ENCODE measurements at regions of chr19 and their contacts with region 1.

Region 1: GRCh38 chr19:46265217-46265828 is 31.5 kb upstream of the HIF3A start:
- DNase-seq: peak; percentile 76
- H3K4me3 ChIP-seq: no peak overlapping the region
- H3K27ac ChIP-seq: no peak overlapping the region
- H3K4me1 ChIP-seq: no peaks in the 10 kb centered on the region
- H3K27me3 ChIP-seq: peaks cover 0 to 13% (median 0%) of the 10 kb centered on the region in 3 donors
- CTCF ChIP-seq: peak; percentile 77 to 94 (median 82)
- EP300 ChIP-seq: no peak
- POLR2A ChIP-seq: no peak

Region 2: GRCh38 chr19:46076951-46077816 is 188.1 kb before region 1 on chr19:
- intact Hi-C with region 1: loop called (anchors 1 kb)
- DNase-seq: peak; percentile 73
- H3K4me3 ChIP-seq: peak overlapping the region; percentile 4 to 36 (median 22)
- H3K27ac ChIP-seq: no peak overlapping the region
- H3K4me1 ChIP-seq: peaks cover 0 to 19% (median 11%) of the 10 kb centered on the region in 4 donors
- H3K27me3 ChIP-seq: peaks cover 16 to 45% (median 43%) of the 10 kb centered on the region in 3 donors
- CTCF ChIP-seq: peak in 3 of 4 experiments; percentile 42 to 55 (median 48)
- EP300 ChIP-seq: no peak
- POLR2A ChIP-seq: no peak